Esophagus squamous epithelium (tissue), 5 donors: ENCODE measurements at regions of chr10 and their contacts with region 1.

Region 1: GRCh38 chr10:60032723-60033122 is 126.4 kb upstream of the CCDC6 start:
- DNase-seq: no peak
- H3K4me3 ChIP-seq: no peak overlapping the region
- H3K27ac ChIP-seq: no peak overlapping the region
- H3K4me1 ChIP-seq: peaks cover 4 to 18% (median 5%) of the 10 kb centered on the region in 3 donors
- H3K27me3 ChIP-seq: no peaks in the 10 kb centered on the region
- CTCF ChIP-seq: peak in 5 of 6 experiments; percentile 39 to 74 (median 58)
- POLR2A ChIP-seq: no peak

Region 2: GRCh38 chr10:59625721-59626522 is 406.8 kb before region 1 on chr10:
- intact Hi-C with region 1: loop called (anchors 5 kb)
- DNase-seq: no peak
- H3K4me3 ChIP-seq: no peak overlapping the region
- H3K27ac ChIP-seq: no peak overlapping the region
- H3K4me1 ChIP-seq: peaks cover 0 to 14% (median 3%) of the 10 kb centered on the region in 3 donors
- H3K27me3 ChIP-seq: no peaks in the 10 kb centered on the region
- CTCF ChIP-seq: peak; percentile 68 to 91 (median 82)
- POLR2A ChIP-seq: no peak

Region 3: DNA sequence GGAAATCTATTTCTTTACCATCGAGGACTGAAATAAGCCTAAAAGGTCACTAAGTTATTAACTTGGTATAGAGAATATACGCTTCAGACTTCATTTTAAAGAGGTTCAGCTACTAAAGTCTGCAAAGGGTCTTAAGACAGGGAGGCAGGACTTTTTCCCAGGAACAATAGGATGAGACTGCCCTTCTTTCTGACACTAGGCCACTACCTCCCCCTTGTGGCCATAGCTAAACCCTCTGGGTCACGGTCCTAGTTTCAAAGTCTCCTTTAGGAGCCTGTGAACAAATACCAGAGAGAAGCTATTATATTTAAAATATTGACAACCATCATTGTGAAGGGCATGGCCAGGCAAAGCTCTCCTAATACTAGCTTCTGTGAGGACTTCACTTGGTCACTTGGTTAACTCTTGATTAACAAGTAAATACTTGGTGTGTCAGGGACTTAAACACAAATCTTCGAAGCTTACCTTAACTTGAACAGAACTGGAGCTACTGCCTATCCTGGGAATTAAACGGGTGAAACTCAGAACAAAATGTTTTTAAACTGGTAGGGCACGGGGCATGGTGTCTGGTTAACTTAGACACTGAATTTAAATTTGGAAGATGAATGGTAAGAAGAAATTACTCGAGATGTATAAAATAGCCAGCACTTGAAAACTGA is 202.0 kb before region 1 on chr10:
- intact Hi-C with region 1: loop called (anchors 10 kb)
- DNase-seq: no peak
- H3K4me3 ChIP-seq: no peak overlapping the region
- H3K27ac ChIP-seq: peak overlapping the region in 1 of 4 donors; percentile 12
- H3K4me1 ChIP-seq: peaks cover 0 to 65% (median 7%) of the 10 kb centered on the region in 3 donors
- H3K27me3 ChIP-seq: no peaks in the 10 kb centered on the region
- CTCF ChIP-seq: peak; percentile 51 to 72 (median 56)
- POLR2A ChIP-seq: no peak

Region 4: DNA sequence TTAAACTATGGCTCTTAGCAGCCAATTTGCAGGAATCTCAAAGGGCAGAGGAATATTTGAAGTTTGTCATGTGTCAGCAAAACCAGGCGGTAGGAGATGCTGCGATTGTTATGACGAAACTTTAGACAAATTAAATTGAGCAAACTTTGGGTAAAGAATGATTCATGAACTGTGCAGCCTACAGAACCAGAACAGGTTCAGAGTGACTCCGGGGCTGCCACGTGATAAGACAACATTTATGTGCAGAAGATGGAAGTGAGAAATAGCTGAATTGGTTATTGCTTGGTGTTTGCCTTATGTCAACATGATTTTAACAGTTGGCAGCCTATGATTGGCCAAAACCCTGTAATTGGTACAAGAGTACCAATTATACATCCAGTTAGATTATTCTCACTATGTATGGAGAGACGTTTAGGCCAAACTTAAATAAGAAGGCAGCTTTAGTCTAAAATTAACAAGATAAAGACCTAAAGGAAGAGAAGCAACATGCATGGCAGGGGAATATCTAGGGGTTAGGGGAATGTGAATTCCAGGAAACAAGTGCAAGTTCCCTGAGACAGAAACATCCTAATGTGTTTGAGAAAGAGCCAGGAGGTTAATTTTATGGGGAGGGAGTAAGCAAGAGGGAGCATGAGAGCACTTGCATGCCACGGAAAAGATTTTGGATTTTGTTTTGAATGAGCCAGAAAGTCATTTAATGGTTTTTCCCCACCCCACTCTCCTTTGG is 86.9 kb before region 1 on chr10:
- intact Hi-C with region 1: no loop called
- DNase-seq: no peak
- H3K4me3 ChIP-seq: no peak overlapping the region
- H3K27ac ChIP-seq: no peak overlapping the region
- H3K4me1 ChIP-seq: no peaks in the 10 kb centered on the region
- H3K27me3 ChIP-seq: no peaks in the 10 kb centered on the region
- CTCF ChIP-seq: no peak
- POLR2A ChIP-seq: no peak

Region 5: DNA sequence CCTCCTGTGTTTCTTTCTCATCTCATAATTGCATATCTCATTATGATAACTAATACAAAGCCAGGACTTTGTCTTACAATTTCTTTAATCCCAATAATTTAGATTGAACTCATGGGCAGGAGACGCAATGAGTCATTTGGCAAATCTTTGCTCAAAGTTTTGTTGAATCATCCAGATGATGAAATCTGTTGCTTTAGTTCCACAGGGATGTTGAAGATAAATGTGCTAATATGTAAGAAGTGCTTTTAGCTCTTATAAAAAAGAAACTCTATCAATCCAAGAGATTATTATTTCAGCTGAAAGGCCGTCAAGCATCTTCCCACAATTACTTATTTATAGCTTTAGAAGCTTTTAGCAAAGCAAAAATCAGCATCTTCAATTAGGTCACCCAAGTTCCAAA is 393.7 kb after region 1 on chr10:
- intact Hi-C with region 1: no loop called
- DNase-seq: no peak
- H3K4me3 ChIP-seq: no peak overlapping the region
- H3K27ac ChIP-seq: no peak overlapping the region
- H3K4me1 ChIP-seq: peaks cover 0 to 51% (median 0%) of the 10 kb centered on the region in 3 donors
- H3K27me3 ChIP-seq: no peaks in the 10 kb centered on the region
- CTCF ChIP-seq: no peak
- POLR2A ChIP-seq: no peak